ENCODE measurements at regions of chr6 and their contacts with region 1.

Region 1: DNA sequence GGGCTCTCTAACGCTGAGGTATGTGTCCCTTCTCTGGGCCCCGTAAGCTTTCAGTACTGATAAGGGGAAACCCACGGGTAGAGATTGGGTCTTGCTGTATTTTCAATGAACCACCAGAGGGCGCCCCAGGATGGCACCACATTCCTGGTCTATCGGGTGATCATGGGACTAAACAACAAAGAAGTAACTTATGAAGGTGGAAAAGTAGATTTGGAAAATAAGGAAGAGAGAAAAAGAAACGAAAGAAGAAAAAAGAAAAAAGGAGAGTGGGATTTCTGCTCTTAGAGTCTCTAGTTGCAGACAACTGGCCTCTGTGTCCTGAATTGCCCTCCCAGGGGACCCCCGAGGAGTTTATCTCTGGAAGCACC is 93.8 kb downstream of the GMPR start:
- DNase-seq: peak; percentile 74
- ATAC-seq: peak; percentile 91
- H3K4me3 ChIP-seq: no peak overlapping the region
- H3K27ac ChIP-seq: no peak overlapping the region
- H3K4me1 ChIP-seq: peaks cover 31% of the 10 kb centered on the region
- H3K27me3 ChIP-seq: no peaks in the 10 kb centered on the region
- CTCF ChIP-seq: peak; percentile 94

Region 2: DNA sequence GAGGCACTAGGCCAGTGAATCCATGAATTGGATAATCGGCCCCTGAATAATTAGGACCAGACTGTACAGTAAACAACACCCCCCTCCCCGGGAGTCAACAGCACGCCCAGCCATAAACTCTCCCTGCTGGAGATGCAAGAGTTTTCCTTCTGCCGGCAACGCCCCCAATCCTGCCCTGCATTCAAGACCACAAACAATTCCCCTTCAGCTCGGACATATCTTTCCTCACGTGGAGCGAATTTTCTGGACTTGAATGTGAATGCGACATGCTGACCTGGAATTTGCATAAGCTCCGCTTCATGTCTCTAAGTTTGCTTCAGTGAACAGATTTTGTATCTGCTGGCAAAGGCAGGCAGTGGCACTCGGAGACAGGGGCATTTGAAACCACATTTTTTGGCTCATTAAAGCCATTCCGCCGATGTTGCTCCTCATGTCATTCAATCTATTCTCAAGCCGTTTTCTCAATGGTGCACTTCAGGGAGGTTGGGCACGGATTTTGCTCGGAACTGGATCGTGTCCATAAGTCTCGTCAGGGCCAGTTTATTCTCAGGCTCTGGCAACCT is 131.8 kb before region 1 on chr6:
- intact Hi-C with region 1: no loop called
- DNase-seq: no peak
- ATAC-seq: peak; percentile 16
- H3K4me3 ChIP-seq: peak overlapping the region; percentile 32
- H3K27ac ChIP-seq: no peak overlapping the region
- H3K4me1 ChIP-seq: no peaks in the 10 kb centered on the region
- H3K27me3 ChIP-seq: no peaks in the 10 kb centered on the region
- CTCF ChIP-seq: no peak

Region 3: GRCh38 chr6:16761471-16762267 is 429.5 kb after region 1 on chr6:
- intact Hi-C with region 1: loop called (anchors 10 kb)
- DNase-seq: peak; percentile 94
- ATAC-seq: peak; percentile 76
- H3K4me3 ChIP-seq: peak overlapping the region; percentile 72
- H3K27ac ChIP-seq: peak overlapping the region; percentile 97
- H3K4me1 ChIP-seq: peaks cover 27% of the 10 kb centered on the region
- H3K27me3 ChIP-seq: no peaks in the 10 kb centered on the region
- CTCF ChIP-seq: peak; percentile 26

Measured in upper lobe of right lung (tissue), 1 donor.